Ascending aorta (tissue), 2 donors: ENCODE measurements at regions of chr4 and their contacts with region 1.

Region 1: GRCh38 chr4:107930821-107931774 is at the start of gene CYP2U1:
- DNase-seq: peak; percentile 66 to 94
- H3K4me3 ChIP-seq: peak within 1 kb of the TSS; percentile 72 to 85
- H3K27ac ChIP-seq: peak within 1 kb of the TSS; percentile 74 to 77
- H3K4me1 ChIP-seq: peaks cover 0 to 12% of the 10 kb centered on the region in 2 donors
- H3K27me3 ChIP-seq: no peaks in the 10 kb centered on the region
- CTCF ChIP-seq: peak; percentile 15 to 25 (median 17)
- total RNA-seq, gene CYP2U1: 23.8 TPM

Region 2: DNA sequence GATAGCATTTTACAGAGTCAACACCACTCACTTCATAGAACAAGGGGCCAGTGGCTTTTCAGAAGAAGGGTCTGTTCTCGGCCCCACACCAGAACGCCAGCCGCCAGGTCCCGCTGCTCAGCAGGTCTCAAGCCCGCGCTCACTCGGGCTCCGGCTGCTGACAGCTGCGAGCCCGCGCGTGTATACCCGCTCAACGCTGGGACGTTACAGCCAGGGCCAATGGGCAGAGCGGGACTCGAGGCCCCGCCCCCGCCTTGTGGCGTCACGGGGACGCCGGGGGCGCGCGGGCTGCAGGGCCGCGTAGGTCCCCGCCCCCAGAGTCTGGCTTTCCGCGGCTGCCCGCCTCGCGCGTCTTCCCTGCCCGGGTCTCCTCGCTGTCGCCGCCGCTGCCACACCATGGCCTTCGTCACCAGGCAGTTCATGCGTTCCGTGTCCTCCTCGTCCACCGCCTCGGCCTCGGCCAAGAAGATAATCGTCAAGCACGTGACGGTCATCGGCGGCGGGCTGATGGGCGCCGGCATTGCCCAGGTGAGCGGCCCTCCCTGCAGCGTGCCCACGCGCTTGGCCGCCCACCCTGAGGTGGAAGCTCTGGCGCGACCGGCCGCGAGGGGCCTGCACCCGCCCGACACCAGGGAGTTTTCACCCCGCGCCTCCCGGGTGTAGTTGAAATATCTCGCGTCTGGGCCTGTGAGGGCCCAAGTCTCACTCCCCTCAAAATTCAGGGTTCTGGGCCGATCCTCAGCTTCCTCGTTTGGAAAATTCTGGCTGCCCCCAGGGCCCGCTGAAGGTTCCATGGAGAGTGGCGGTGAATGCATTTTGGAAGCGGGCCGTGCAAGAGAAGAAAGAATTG is 58.7 kb after region 1 on chr4 and contains the start of gene HADH:
- intact Hi-C with region 1: loop called (anchors 2 kb)
- DNase-seq: peak; percentile 77 to 97
- H3K4me3 ChIP-seq: peak within 1 kb of the TSS; percentile 74 to 79
- H3K27ac ChIP-seq: peak within 1 kb of the TSS; percentile 92 to 93
- H3K4me1 ChIP-seq: peaks cover 3 to 47% of the 10 kb centered on the region in 2 donors
- H3K27me3 ChIP-seq: no peaks in the 10 kb centered on the region
- CTCF ChIP-seq: no peak
- total RNA-seq, gene HADH: 34.3 TPM

Region 3: DNA sequence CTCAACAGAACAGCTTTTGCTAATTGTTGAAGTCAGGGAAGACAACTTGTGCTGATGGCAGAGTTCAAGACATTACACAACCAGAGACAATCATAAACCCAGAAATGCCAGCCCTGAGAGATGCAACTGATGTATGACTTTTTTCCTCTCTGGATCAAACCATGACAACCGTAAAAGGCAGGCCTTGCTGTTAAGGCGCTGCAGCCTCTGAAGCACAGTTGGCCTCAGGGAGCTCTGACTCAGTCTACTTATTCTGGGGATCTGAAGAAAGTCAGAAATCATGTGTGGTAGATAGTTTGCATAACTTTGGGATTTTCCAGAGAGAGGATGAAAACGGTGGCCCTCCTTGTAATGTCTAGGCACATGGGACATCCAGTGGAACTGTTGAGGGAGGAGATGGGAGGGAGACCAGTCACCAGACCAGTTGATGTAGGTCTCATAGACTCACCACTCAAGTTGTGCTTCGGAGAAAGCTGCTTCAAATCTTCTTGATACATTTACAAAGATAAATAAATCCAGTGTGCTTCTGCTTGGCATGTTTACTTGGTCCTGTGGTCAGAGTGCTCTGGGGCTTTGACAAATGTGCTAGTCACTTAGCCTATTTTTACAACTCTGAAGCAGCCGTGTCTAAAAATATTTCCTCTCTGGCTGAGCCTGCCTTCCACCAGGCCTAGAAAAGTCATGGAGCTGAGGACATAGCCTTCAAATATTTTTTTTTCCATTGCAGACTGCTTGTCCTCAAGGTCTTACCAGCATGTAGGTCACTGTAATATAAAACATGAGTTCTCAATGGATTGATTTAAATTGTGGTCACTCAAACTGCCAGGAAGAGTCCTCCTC is 66.1 kb after region 1 on chr4:
- intact Hi-C with region 1: loop called (anchors 2 kb)
- DNase-seq: peak in 1 of 2 donors; percentile 84
- H3K4me3 ChIP-seq: peak overlapping the region in 1 of 2 donors; percentile 25
- H3K27ac ChIP-seq: peak overlapping the region; percentile 92 to 93
- H3K4me1 ChIP-seq: peaks cover 17 to 50% of the 10 kb centered on the region in 2 donors
- H3K27me3 ChIP-seq: no peaks in the 10 kb centered on the region
- CTCF ChIP-seq: no peak

Region 4: GRCh38 chr4:108018040-108018883 is 87.2 kb after region 1 on chr4:
- intact Hi-C with region 1: loop called (anchors 2 kb)
- DNase-seq: peak in 1 of 2 donors; percentile 91
- H3K4me3 ChIP-seq: no peak overlapping the region
- H3K27ac ChIP-seq: no peak overlapping the region
- H3K4me1 ChIP-seq: no peaks in the 10 kb centered on the region
- H3K27me3 ChIP-seq: no peaks in the 10 kb centered on the region
- CTCF ChIP-seq: peak; percentile 65 to 87 (median 80)

Region 5: DNA sequence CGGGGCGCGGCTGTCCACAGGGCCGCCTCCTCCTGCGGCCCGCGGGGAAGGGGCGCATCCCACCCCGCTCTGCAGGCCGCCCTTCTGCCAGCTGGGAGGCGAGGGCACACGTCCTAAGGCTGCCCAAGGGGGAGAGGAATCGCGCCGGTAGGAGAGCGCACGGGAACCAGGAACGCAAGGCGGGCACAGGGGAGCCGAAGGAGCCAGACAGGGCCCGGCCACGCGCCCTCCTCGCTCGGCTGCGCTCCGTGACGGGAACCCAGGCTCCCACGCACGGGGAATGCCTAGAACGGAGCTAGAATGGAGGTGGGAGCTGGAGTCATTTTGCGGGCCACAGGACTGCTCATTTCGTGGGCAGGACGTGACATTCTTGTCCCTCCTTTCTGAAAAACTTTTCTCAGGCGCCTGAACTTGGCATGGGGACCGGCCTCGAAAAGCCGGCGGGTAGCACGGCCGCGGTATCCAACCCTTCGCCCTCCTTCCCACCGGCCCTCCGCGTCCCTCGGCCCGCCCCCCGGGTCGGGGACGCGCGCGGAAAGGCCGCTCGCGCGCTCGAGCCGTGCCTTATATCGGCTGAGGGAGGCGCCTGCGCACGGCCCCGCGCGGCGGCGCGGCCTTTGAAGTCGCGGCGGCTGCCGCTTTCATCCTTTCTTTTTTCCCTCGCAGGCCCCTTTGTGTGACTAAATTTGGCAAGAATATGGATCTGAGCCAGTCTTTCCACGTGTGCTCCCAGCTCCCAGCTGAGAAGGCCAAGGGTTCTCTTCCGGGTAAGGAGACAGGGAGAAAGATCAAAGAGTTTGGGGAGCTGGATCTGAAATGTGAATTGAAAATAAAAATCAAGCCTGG is 241.9 kb after region 1 on chr4:
- intact Hi-C with region 1: loop called (anchors 5 kb)
- DNase-seq: peak in 1 of 2 donors; percentile 70
- H3K4me3 ChIP-seq: peak overlapping the region; percentile 49 to 68
- H3K27ac ChIP-seq: peak overlapping the region in 1 of 2 donors; percentile 27
- H3K4me1 ChIP-seq: peaks cover 7 to 10% of the 10 kb centered on the region in 2 donors
- H3K27me3 ChIP-seq: peaks cover 14% of the 10 kb centered on the region
- CTCF ChIP-seq: no peak